Activated CD4-positive, alpha-beta T cell treated with anti-CD3 and anti-CD28 coated beads for 36 hours (primary cell): ENCODE measurements at regions of chr10 and their contacts with region 1.

Region 1: GRCh38 chr10:11472158-11472753 is 139.2 kb downstream of the USP6NL start:
- DNase-seq: peak; percentile 86
- ATAC-seq: peak; percentile 95
- H3K4me3 Mint-ChIP-seq: no peak overlapping the region
- H3K27ac Mint-ChIP-seq: no peak overlapping the region
- H3K4me1 Mint-ChIP-seq: peaks cover 1% of the 10 kb centered on the region
- H3K27me3 Mint-ChIP-seq: no peaks in the 10 kb centered on the region

Region 2: DNA sequence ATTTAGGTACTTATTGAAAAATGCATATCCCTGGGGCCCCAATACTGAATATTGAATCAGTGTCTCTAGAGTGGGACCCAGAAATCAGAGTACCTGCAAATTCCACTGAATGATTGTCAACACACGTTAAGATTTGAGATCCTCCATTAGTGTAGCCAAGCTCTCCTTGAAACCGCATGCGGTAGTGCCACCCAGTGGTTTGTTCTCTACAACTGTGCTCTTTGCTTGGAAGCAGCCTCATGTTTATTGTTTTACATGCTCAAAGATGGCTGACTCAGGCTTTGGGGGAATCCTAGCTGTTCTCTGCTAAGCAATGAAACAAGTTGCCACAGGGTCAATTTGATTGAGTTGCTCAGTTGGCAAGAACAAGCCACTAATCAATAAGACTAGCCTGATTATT is 794.8 kb before region 1 on chr10:
- CTCF ChIA-PET with region 1: interaction called, 3 read pairs
- POLR2A ChIA-PET with region 1: no interaction called
- intact Hi-C with region 1: loop called in 1 of 2 experiments (anchors 5 kb)
- DNase-seq: peak; percentile 81
- ATAC-seq: peak; percentile 86
- H3K4me3 Mint-ChIP-seq: no peak overlapping the region
- H3K27ac Mint-ChIP-seq: no peak overlapping the region
- H3K4me1 Mint-ChIP-seq: peaks cover 16% of the 10 kb centered on the region
- H3K27me3 Mint-ChIP-seq: peaks cover 2% of the 10 kb centered on the region

Region 3: DNA sequence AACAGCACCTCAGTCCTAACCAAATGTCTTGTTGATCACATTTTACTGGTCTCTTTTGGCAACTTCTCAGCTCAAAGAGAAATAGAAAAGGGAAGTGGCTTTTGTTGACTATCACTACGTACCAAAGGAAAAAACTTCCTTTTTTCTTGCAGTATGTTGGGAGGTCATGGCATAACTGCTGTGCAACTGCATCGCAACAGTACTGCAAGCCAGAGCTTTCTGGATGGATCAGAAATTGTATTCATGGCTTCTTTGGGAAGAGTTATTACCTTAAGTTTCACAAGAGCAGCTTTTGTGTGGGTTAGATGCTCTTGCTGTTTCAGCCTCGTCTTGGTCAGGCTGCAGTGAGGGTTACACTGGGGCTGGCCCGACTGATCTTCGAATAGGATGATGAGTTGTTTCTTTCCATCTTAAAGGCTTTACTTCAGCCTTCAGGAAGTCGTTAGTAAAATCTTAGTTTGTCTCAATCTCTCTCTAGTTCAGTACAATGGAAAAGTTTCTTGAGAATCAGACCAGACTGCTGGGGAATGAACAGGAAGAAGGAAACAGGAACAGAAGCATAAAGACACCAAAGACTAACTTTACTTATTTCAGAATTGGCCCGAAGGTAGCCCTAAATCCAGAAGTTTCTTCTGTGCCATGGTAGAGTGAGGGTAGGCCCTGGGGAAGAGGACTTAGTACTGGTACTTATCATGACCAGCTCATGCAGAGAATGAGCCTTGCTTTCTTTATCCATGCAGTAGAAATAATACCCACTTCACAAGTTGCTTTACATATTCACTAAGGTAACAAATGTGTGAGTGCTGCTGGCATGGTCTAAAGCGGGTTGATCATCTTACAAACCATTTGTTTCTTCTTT is 301.0 kb before region 1 on chr10:
- CTCF ChIA-PET with region 1: no interaction called
- POLR2A ChIA-PET with region 1: no interaction called
- intact Hi-C with region 1: loop called (anchors 2 to 10 kb)
- DNase-seq: peak; percentile 80
- ATAC-seq: peak; percentile 49
- H3K4me3 Mint-ChIP-seq: no peak overlapping the region
- H3K27ac Mint-ChIP-seq: no peak overlapping the region
- H3K4me1 Mint-ChIP-seq: peaks cover 41% of the 10 kb centered on the region
- H3K27me3 Mint-ChIP-seq: no peaks in the 10 kb centered on the region

Region 4: GRCh38 chr10:11270135-11270857 is 202.0 kb before region 1 on chr10:
- CTCF ChIA-PET with region 1: no interaction called
- POLR2A ChIA-PET with region 1: no interaction called
- intact Hi-C with region 1: loop called in 1 of 2 experiments (anchors 10 kb)
- DNase-seq: peak; percentile 88
- ATAC-seq: peak; percentile 60
- H3K4me3 Mint-ChIP-seq: peak overlapping the region; percentile 27
- H3K27ac Mint-ChIP-seq: peak overlapping the region; percentile 81
- H3K4me1 Mint-ChIP-seq: peaks cover 90% of the 10 kb centered on the region
- H3K27me3 Mint-ChIP-seq: no peaks in the 10 kb centered on the region

Region 5: GRCh38 chr10:11353006-11353896 is 119.0 kb before region 1 on chr10:
- CTCF ChIA-PET with region 1: no interaction called
- POLR2A ChIA-PET with region 1: no interaction called
- intact Hi-C with region 1: loop called in 1 of 2 experiments (anchors 5 kb)
- DNase-seq: no peak
- ATAC-seq: peak; percentile 44
- H3K4me3 Mint-ChIP-seq: no peak overlapping the region
- H3K27ac Mint-ChIP-seq: no peak overlapping the region
- H3K4me1 Mint-ChIP-seq: peaks cover 6% of the 10 kb centered on the region
- H3K27me3 Mint-ChIP-seq: no peaks in the 10 kb centered on the region